ENCODE measurements at regions of chr5 and their contacts with region 1.

Region 1: GRCh38 chr5:149960272-149961185 is at the start of gene SLC26A2:
- DNase-seq: peak; percentile 99
- ATAC-seq: peak; percentile 95
- H3K4me3 ChIP-seq: peak within 1 kb of the TSS; percentile 78
- H3K27ac ChIP-seq: peak within 1 kb of the TSS; percentile 56
- H3K4me1 ChIP-seq: peaks cover 31% of the 10 kb centered on the region
- H3K27me3 ChIP-seq: no peaks in the 10 kb centered on the region
- CTCF ChIP-seq: no peak
- total RNA-seq, gene SLC26A2: 10.8 and 13.1 TPM in 2 replicates

Region 2: GRCh38 chr5:149852641-149853330 is 107.7 kb before region 1 on chr5:
- CTCF ChIA-PET with region 1: interaction called, 12 read pairs
- POLR2A ChIA-PET with region 1: interaction called, 9 read pairs
- intact Hi-C with region 1: loop called (anchors 1 kb)
- DNase-seq: peak; percentile 87
- ATAC-seq: peak; percentile 93
- H3K4me3 ChIP-seq: no peak overlapping the region
- H3K27ac ChIP-seq: no peak overlapping the region
- H3K4me1 ChIP-seq: peaks cover 7% of the 10 kb centered on the region; the same call in 1 of the 2 replicates
- H3K27me3 ChIP-seq: no peaks in the 10 kb centered on the region
- CTCF ChIP-seq: peak; percentile 99

Region 3: GRCh38 chr5:149873896-149874295 is 86.6 kb before region 1 on chr5:
- CTCF ChIA-PET with region 1: interaction called, 10 read pairs
- POLR2A ChIA-PET with region 1: no interaction called
- intact Hi-C with region 1: no loop called
- DNase-seq: no peak
- ATAC-seq: no peak
- H3K4me3 ChIP-seq: no peak overlapping the region
- H3K27ac ChIP-seq: no peak overlapping the region
- H3K4me1 ChIP-seq: no peaks in the 10 kb centered on the region
- H3K27me3 ChIP-seq: no peaks in the 10 kb centered on the region
- CTCF ChIP-seq: no peak

Region 4: GRCh38 chr5:149902177-149902576 is 58.4 kb before region 1 on chr5:
- CTCF ChIA-PET with region 1: interaction called, 13 read pairs
- POLR2A ChIA-PET with region 1: no interaction called
- intact Hi-C with region 1: loop called (anchors 1 kb)
- DNase-seq: no peak
- ATAC-seq: peak; percentile 56; the same call in 1 of the 2 replicates
- H3K4me3 ChIP-seq: no peak overlapping the region
- H3K27ac ChIP-seq: no peak overlapping the region
- H3K4me1 ChIP-seq: no peaks in the 10 kb centered on the region
- H3K27me3 ChIP-seq: no peaks in the 10 kb centered on the region
- CTCF ChIP-seq: no peak

Region 5: DNA sequence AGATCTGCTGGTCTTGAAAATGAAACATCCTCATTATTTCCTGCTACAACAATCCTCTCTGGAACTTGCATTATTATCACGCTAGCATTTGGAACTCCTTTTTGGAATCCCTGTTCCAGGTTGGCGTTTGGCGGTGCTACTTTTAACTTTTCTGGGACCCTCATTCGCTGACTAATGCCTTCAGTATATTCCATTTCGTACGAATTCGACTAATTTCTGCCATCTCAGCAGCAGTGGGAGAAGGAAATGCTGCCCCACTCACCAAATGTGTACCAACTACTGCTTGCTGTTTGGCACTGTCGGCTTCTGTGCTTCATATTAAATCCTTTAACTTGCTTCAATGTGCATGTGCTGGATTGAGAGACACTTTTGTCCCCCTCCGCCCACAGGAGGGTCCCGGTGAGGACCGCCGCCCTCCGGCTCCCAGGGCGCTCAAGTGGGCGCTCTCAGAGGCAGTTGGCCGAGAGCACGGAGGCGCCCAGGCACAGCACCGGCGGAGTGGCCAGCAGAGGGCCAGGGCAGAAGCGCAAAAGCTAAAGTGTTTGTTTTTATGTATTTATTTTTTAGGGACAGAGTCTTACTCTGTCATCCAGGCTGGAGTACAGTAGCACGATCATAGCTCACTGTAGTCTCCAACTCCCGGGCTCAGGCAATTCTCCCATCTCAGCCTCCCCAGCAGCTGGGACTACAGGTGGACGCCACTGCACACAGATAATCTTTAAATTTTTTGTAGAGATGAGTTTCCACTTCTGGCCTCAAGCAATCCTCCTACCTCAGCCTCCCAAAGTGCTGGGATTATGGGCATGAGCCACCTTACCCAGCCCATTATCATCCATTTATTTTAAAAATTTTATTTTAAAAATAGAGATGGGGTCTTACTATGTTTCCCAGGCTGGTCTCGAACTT is 27.8 kb before region 1 on chr5:
- CTCF ChIA-PET with region 1: interaction called, 32 read pairs
- POLR2A ChIA-PET with region 1: interaction called, 5 read pairs
- intact Hi-C with region 1: loop called (anchors 1 kb)
- DNase-seq: peak; percentile 80
- ATAC-seq: peak; percentile 84
- H3K4me3 ChIP-seq: peak overlapping the region; percentile 71
- H3K27ac ChIP-seq: no peak overlapping the region
- H3K4me1 ChIP-seq: peaks cover 33% of the 10 kb centered on the region
- H3K27me3 ChIP-seq: no peaks in the 10 kb centered on the region
- CTCF ChIP-seq: peak; percentile 93

Region 6: DNA sequence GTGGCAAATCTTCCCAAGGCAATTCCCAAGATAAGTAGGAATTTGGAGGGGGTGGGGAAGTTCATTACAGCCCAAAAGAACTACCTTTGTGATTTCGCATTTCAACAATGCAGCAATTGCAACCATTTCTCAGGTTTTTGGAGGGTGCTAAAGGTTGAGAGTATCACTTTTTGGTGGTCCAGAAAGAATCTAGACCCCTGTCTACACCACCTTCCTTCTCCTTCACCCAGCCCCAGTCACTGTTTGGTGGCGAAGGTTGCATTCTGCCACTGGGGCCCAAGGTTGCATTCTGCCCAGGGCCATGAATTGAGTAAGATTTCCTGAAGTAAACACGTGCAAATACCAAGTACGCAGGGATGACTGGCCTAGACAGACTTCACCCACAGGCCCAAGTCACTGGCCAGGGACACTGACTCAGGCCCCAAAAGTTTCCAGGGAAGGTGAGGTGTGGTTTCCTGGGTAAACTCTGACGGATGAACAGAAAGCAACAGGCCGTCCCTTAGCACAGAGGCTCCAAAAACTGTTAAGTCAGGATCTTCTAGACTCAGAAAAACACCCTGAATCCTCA is 21.7 kb before region 1 on chr5:
- CTCF ChIA-PET with region 1: interaction called, 32 read pairs
- POLR2A ChIA-PET with region 1: interaction called, 5 read pairs
- intact Hi-C with region 1: loop called (anchors 1 kb)
- DNase-seq: peak; percentile 100
- ATAC-seq: peak; percentile 83
- H3K4me3 ChIP-seq: peak overlapping the region; percentile 55
- H3K27ac ChIP-seq: peak overlapping the region; percentile 91
- H3K4me1 ChIP-seq: peaks cover 60% of the 10 kb centered on the region
- H3K27me3 ChIP-seq: no peaks in the 10 kb centered on the region
- CTCF ChIP-seq: no peak

Region 7: DNA sequence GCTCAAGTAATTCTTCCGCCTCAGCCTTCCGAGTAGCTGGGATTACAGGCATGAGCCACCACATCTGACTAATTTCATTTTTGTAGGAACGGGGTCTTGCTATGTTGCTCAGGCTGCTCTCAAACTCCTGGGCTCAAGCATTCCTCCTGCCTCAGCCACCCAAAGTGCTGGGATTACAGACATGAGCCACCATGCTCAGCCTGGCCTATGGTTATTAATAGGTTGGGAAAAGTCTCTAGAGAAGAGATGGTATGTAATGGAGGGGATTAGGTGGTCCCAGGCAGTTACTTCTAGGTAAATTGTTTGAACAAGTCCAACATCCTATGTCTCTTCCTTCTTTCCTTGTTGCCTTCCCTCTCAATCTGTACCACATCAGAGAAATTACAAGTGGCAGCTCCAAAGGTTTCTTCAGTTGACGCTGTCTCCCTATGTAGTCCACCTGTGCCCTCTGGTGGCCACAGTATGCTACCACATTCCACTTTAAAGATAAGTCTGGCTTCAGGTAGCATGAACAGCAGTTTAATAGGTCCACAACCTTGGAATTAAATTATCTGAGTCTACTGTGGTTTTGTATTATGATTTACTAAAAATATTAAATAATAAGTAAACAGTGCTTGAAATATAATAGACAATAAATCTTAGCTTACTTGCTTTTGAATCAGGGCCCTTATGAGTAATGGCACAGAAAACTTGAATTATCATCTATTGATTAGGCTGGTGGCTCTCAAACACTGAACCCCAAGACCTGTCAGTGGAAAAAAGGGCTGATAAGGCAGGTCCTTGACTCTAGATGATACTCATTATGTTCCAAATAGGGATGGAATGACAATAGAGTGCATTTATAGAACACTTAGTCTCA is 30.2 kb after region 1 on chr5:
- CTCF ChIA-PET with region 1: interaction called, 5 read pairs
- POLR2A ChIA-PET with region 1: interaction called, 3 read pairs
- intact Hi-C with region 1: loop called (anchors 1 kb)
- DNase-seq: peak; percentile 95
- ATAC-seq: peak; percentile 95
- H3K4me3 ChIP-seq: no peak overlapping the region
- H3K27ac ChIP-seq: no peak overlapping the region
- H3K4me1 ChIP-seq: no peaks in the 10 kb centered on the region
- H3K27me3 ChIP-seq: no peaks in the 10 kb centered on the region
- CTCF ChIP-seq: peak; percentile 98

Region 8: DNA sequence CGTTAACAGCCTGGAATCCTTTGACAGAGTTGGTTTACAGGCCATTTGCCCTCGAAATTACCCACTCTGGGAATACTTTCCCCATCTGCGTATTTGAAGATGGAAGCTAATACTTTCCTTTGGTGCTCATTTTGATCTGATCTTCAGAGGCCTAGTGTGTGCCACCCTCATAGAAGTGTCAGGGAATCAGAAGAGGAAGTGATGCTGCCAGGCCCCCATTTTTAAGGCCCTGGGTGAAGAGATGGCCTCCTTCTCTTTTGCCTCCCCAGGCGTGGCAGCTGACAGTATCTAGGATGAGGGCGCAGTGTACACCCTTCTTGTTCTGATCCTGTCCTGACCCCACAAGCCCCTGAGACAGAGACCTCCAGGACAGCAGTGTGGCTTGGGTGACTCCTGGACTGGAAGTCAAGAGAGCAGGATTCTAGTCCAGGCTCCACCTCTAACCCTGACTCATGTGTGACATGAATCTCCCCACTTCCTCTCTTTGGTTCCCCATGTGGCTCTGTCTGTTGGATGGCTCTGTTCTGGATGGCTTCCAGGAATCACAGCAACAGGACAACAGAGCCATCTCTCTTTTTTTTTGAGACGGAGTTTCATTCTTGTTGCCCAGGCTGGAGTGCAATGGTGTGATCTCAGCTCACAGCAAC is 98.1 kb after region 1 on chr5:
- CTCF ChIA-PET with region 1: no interaction called
- POLR2A ChIA-PET with region 1: no interaction called
- intact Hi-C with region 1: no loop called
- DNase-seq: peak; percentile 81
- ATAC-seq: peak; percentile 80
- H3K4me3 ChIP-seq: no peak overlapping the region
- H3K27ac ChIP-seq: no peak overlapping the region
- H3K4me1 ChIP-seq: peaks cover 12% of the 10 kb centered on the region
- H3K27me3 ChIP-seq: no peaks in the 10 kb centered on the region
- CTCF ChIP-seq: no peak

Region 9: DNA sequence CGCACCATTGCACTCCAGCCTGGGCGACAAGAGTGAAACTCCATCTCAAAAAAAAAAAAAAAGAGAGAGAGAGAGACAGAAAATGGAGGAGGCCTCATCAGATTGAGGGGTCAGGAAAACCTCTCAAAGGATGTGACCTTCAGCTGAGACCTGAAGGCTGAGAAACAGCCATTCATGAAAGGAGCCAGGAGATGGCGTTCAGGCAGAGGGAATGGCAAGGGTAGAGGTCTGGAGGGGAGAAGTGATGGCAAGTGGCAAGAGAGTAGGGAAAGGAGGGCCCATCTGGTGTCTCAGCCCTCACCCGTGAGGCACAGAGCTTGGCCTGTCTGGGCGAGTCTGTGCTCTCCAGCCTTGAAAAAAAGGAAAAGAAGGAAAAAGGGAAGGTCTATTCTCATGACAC is 312.0 kb after region 1 on chr5:
- CTCF ChIA-PET with region 1: no interaction called
- POLR2A ChIA-PET with region 1: no interaction called
- intact Hi-C with region 1: no loop called
- DNase-seq: peak; percentile 72
- ATAC-seq: peak; percentile 74
- H3K4me3 ChIP-seq: no peak overlapping the region
- H3K27ac ChIP-seq: no peak overlapping the region
- H3K4me1 ChIP-seq: no peaks in the 10 kb centered on the region
- H3K27me3 ChIP-seq: 0 out of 2 replicates have a peak, but pooled peaks cover 6% of the 10 kb centered on the region
- CTCF ChIP-seq: peak; percentile 70